PC-9 (cell line): ENCODE measurements at regions of chr3 and their contacts with region 1.

Region 1: DNA sequence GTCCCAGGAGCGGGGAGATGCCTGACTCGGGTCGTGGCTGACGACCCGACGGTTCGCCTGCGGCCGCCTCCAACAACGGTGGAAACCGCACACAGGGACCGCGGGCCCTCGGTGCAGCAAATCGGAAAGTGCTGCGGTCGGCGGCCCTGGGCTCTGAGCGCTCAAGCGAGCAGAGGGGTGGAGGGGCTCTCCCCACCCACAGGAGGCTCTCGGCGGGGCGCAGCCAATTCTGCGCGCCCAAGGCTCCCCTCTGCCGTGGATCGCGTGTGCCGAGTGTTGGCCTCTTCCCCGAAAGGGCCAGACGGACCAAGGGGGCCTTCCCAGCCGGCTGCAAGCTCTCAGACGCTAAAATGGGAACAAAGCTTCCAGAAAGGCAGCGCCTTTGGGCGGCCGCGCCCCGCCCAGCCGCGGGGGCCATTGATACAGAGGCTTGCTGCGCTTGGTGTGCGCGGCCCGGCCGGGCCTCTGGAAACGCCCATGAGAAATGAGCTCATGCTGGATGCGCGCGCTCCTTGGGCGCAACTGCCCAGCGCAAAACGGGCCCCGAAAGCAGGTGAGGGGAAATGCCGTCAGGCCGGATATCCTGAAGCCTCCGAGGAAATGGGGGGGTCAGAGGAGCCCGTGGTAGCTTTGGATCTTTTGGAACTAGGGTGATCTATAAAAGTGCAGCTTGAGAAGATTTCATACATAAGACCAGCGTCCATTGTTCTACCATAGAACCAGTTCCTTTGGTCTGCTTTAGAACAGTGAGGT is 1.2 kb upstream of the GSK3B start:
- DNase-seq: peak; percentile 83 to 94
- H3K4me3 ChIP-seq: peak overlapping the region; percentile 75
- H3K27ac ChIP-seq: peak overlapping the region; percentile 100
- H3K4me1 ChIP-seq: peaks cover 32% of the 10 kb centered on the region
- H3K27me3 ChIP-seq: no peaks in the 10 kb centered on the region
- CTCF ChIP-seq: no peak

Region 2: DNA sequence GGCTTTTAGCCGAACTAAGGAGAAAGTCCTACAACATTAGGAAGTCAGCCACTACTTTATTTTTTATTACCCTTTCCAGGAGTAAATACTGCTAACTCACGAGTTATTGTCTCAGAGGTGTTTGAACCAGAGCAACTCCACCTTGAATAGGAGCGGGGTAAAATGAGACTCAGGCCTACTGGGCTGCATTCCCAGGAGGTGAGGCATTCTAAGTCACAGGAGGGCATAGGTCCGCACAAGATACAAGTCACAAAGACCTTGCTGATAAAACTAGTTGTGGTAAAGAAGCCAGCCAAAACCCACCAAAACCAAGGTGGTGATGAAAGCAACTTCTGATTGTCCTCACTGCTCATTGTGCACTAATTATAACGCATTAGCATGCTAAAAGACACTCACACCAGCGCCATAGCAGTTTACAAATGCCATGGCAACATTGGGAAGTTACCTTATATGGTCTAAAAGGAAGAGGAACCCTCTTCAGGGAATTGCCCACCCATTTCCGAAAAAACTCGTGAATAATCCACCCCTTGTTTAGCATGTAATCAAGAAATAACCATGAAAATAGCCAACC is 1616.6 kb before region 1 on chr3:
- CTCF ChIA-PET with region 1: no interaction called
- POLR2A ChIA-PET with region 1: no interaction called
- intact Hi-C with region 1: loop called (anchors 5 kb)
- DNase-seq: peak; percentile 71 to 75
- H3K4me3 ChIP-seq: peak overlapping the region; percentile 13; the same call in 1 of the 2 replicates
- H3K27ac ChIP-seq: peak overlapping the region; percentile 73
- H3K4me1 ChIP-seq: peaks cover 15% of the 10 kb centered on the region
- H3K27me3 ChIP-seq: no peaks in the 10 kb centered on the region
- CTCF ChIP-seq: no peak

Region 3: DNA sequence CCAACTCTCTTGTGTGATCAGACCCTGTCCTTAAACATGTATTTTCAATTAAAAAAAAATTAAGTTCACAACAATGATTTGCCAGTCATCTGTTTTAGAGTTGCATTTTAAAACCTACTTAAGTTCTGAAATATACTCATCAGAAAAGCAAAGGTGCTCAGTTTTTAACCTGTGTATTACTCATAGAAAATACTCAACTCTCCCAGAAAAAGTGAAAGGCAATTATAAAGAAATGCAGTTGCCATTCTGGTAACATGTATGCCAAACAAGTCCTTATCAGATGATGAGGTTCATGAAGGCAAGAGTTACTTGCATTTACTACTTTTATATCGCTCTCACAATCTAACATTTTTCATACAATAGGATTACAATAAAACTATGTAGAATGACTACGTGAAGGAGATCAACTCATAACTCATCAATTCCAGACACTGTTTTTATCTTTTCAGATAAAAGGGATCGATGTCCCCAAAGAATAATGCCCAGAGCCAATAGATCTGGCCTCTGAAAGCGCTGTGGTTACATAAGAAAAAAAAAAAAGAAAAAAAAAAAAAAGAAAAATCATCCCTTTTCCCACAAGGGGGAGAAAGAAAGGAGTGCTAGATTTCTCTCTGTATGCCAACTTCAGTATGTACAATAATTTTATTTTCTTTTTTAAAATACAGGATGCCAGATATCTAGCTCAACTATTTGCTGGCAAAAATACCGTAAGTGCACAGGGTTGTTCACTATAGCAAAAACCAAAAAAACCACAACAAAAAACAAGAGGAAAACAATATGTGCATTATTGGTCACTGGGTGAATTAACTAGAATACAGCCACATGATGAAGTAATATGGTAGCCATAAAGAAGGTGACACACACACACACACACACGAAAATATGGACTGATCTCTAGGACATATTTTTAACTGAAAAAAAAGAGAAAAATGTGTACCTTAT is 176.1 kb before region 1 on chr3:
- CTCF ChIA-PET with region 1: interaction called, 3 read pairs
- POLR2A ChIA-PET with region 1: interaction called, 4 read pairs
- intact Hi-C with region 1: loop called (anchors 5 kb)
- DNase-seq: no peak
- H3K4me3 ChIP-seq: no peak overlapping the region
- H3K27ac ChIP-seq: no peak overlapping the region
- H3K4me1 ChIP-seq: no peaks in the 10 kb centered on the region
- H3K27me3 ChIP-seq: no peaks in the 10 kb centered on the region
- CTCF ChIP-seq: peak; percentile 30; the same call in 1 of the 2 replicates

Region 4: DNA sequence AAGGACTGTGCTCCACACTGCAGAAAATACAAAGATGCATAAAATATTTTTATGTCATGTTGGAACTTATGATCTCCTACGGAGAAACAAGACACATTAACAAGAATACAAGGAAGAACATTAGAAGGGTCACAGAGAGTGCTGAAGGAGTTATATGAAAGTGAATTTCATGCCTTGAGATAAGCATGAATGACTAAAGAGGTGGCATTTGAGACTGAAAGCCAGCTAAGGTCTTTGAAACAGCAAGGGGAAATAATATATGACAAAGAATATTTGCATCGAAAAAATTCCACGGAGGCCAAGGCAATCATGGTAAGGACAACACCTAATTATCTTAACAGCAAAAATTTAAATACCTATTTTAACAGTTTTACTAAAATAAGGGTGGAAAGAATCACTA is 13.7 kb before region 1 on chr3:
- CTCF ChIA-PET with region 1: no interaction called
- POLR2A ChIA-PET with region 1: interaction called, 13 read pairs
- intact Hi-C with region 1: no loop called
- DNase-seq: no peak
- H3K4me3 ChIP-seq: no peak overlapping the region
- H3K27ac ChIP-seq: no peak overlapping the region
- H3K4me1 ChIP-seq: no peaks in the 10 kb centered on the region
- H3K27me3 ChIP-seq: no peaks in the 10 kb centered on the region
- CTCF ChIP-seq: no peak

Region 5: DNA sequence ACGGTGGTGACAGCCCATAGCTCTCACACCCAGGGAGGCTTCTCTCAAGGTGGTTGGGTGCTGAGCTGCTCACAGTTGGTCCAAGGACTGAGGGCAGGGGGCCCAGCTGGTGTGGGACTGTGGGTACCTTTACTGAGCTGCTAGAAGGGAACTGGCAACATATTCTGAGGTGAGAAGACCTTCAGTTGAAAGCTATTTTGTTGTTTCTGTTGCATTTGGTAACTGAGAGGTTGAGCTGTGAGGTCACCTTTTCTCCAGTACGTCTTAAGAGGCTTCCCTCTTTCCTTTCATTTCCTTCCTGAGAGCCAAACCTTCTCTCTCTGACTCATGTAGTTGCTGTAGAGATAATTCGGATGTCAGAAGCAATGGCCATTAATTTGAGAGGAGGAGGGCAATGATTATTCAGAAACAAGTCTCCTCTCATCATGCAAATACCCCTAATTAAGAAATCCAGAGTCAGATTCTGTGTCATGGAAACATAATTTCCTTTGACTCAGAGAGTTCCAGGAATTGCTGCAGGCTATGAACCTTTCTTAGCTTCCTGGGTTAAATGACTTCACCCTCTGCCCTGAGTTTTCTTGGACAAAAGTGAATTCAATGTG is 57.8 kb after region 1 on chr3:
- CTCF ChIA-PET with region 1: no interaction called
- POLR2A ChIA-PET with region 1: interaction called, 11 read pairs
- intact Hi-C with region 1: no loop called
- DNase-seq: peak; percentile 21 to 86
- H3K4me3 ChIP-seq: peak overlapping the region; percentile 17
- H3K27ac ChIP-seq: peak overlapping the region; percentile 93
- H3K4me1 ChIP-seq: peaks cover 54% of the 10 kb centered on the region
- H3K27me3 ChIP-seq: no peaks in the 10 kb centered on the region
- CTCF ChIP-seq: no peak

Region 6: DNA sequence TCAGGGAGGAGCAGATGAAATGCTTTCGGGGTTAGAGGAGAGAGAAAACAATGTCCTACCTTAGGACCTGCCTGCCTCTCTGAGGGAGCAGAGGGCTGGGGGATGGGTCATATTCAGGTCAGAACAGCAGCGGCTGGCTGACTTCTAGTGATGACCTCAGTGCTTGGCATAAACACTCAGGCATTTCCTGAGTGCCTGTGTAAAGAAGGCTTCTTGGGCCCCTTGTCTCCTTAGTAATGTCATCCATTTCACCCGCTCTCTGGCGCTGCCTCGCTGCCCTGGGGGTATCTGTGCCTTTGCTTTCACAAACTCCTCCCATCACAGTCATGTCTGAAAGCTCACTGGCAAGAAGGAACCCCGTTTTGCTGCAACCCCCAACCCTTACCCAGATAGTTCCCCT is 81.7 kb after region 1 on chr3:
- CTCF ChIA-PET with region 1: interaction called, 4 read pairs
- POLR2A ChIA-PET with region 1: interaction called, 10 read pairs
- intact Hi-C with region 1: loop called (anchors 1 kb)
- DNase-seq: peak; percentile 79 to 86
- H3K4me3 ChIP-seq: peak overlapping the region; percentile 32; the same call in 1 of the 2 replicates
- H3K27ac ChIP-seq: peak overlapping the region; percentile 78
- H3K4me1 ChIP-seq: peaks cover 38% of the 10 kb centered on the region
- H3K27me3 ChIP-seq: no peaks in the 10 kb centered on the region
- CTCF ChIP-seq: no peak

Region 7: GRCh38 chr3:120417272-120417911 is 322.0 kb after region 1 on chr3:
- CTCF ChIA-PET with region 1: interaction called, 3 read pairs
- POLR2A ChIA-PET with region 1: interaction called, 6 read pairs
- intact Hi-C with region 1: loop called (anchors 10 kb)
- DNase-seq: peak; percentile 91 to 92
- H3K4me3 ChIP-seq: peak overlapping the region; percentile 34; the same call in 1 of the 2 replicates
- H3K27ac ChIP-seq: peak overlapping the region; percentile 32; the same call in 1 of the 2 replicates
- H3K4me1 ChIP-seq: peaks cover 11% of the 10 kb centered on the region
- H3K27me3 ChIP-seq: no peaks in the 10 kb centered on the region
- CTCF ChIP-seq: peak; percentile 85